ENCODE measurements at regions of chr5 and their contacts with region 1.

Region 1: DNA sequence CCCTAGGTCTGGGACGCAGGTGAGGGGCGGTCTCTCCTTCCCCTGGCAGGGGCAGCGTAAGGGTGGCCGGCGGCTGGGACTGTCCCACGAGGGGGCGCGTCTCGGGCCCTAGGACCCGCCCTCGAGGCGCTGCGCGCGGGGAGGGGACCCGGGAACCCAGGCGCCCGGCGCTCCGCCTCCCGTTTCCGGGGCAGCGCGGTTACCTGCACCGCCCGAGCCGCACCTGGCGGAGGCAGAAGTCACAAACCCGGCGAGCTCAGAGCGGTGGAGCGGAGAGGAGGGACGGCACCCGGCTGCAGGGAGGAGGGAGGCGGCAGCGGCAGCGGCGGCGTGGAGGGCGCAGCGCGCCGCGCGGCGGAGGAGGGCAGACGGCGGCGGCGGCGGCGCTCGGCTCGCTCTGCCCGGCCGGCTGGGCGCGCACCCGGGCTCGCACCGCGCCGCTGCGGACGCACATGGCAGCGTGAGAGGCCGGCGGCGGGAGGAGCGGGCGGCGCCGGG is at the start of gene WWC1:
- DNase-seq: peak; percentile 99
- H3K4me3 Mint-ChIP-seq: peak within 1 kb of the TSS; percentile 97
- H3K27ac Mint-ChIP-seq: peak within 1 kb of the TSS; percentile 85
- H3K4me1 Mint-ChIP-seq: peaks cover 81% of the 10 kb centered on the region
- H3K27me3 Mint-ChIP-seq: no peaks in the 10 kb centered on the region
- CTCF ChIP-seq: peak; percentile 30
- total RNA-seq, gene WWC1: 190 TPM in 2 replicates

Region 2: GRCh38 chr5:166810721-166811120 is 1480.8 kb before region 1 on chr5:
- CTCF ChIA-PET with region 1: no interaction called
- intact Hi-C with region 1: no loop called
- DNase-seq: no peak
- H3K4me3 Mint-ChIP-seq: no peak overlapping the region
- H3K27ac Mint-ChIP-seq: no peak overlapping the region
- H3K4me1 Mint-ChIP-seq: peaks cover 9% of the 10 kb centered on the region
- H3K27me3 Mint-ChIP-seq: no peaks in the 10 kb centered on the region
- CTCF ChIP-seq: no peak

Region 3: DNA sequence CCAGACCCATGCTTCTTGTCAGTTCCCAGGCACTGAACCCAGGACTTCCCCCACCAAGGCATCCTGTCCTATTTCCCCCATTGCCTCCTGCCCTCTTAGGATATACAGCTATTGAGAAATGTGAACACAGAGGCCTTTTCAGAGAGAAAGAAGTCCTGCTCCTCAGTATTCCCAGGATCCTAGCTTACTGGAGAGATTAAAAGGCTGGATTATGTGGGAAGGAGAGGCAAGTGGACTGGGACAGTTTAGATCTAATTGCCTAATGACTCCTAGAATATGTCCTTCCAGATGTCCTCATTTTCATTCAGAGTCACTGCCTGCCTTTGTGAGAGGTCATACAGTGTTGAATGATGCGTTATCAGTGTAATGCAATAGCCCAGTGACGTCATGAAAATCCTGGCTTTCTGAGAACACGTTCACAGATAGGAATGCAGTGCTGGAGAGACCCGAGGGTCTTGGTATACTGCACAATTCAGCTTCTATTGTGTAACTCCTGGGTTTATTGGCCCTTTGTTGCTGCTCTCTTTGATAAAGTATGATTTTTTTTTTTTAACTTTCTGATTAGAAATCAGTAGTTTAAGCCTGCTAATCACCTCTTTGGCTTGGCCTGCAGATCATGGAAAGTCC is 26.1 kb after region 1 on chr5:
- CTCF ChIA-PET with region 1: interaction called, 32 read pairs
- intact Hi-C with region 1: loop called (anchors 1 kb)
- DNase-seq: peak; percentile 77
- H3K4me3 Mint-ChIP-seq: peak overlapping the region; percentile 66
- H3K27ac Mint-ChIP-seq: peak overlapping the region; percentile 82
- H3K4me1 Mint-ChIP-seq: peaks cover 79% of the 10 kb centered on the region
- H3K27me3 Mint-ChIP-seq: no peaks in the 10 kb centered on the region
- CTCF ChIP-seq: no peak

Region 4: DNA sequence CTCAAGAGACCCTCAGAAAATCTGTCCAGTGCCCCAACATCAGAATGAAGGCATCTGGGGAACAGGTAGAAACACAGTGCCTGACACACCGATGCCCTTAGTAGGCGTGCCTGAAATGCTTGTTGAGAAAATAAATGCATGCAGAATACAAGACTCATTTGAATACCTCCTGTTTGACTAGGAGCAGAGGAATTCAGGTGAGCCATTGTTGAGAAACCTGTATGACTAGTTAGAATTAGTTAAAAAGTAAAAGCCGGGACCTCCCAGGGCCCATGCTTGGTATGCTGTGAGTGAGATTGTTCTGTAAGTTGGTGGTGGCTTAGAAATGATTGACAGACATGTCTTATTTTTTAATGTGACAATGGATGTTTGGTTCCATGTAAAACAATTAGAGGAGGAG is 54.9 kb after region 1 on chr5:
- CTCF ChIA-PET with region 1: interaction called, 9 read pairs
- intact Hi-C with region 1: loop called (anchors 2 kb)
- DNase-seq: peak; percentile 84
- H3K4me3 Mint-ChIP-seq: peak overlapping the region; percentile 53
- H3K27ac Mint-ChIP-seq: peak overlapping the region; percentile 85
- H3K4me1 Mint-ChIP-seq: peaks cover 91% of the 10 kb centered on the region
- H3K27me3 Mint-ChIP-seq: no peaks in the 10 kb centered on the region
- CTCF ChIP-seq: no peak

Region 5: DNA sequence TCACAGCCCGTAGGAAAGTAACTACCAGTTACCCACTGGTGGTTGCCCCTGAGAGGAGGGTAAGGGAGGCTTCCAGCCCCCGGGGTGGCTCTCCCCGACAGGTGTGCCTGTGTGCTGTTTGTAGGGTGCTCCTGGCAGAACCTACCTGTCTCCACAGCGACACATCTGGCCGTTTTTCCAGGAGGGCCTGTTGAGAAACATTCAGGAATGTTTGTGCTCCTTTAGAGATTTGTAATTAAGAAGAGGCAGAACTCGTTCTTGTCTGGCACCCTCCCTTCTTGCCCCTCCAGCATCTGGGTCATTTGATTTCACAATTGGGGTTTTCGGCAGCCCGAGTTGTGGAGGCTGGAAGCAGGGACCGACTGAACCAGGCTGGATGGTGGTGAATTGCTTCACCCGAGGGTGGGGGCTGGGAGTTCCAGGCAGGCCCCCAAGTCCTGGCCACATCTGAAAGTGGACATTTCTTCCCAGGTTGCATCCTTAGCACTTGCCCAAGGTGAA is 74.1 kb after region 1 on chr5:
- CTCF ChIA-PET with region 1: interaction called, 7 read pairs
- intact Hi-C with region 1: loop called (anchors 2 kb)
- DNase-seq: peak; percentile 82
- H3K4me3 Mint-ChIP-seq: peak overlapping the region; percentile 49
- H3K27ac Mint-ChIP-seq: peak overlapping the region; percentile 72
- H3K4me1 Mint-ChIP-seq: peaks cover 66% of the 10 kb centered on the region
- H3K27me3 Mint-ChIP-seq: no peaks in the 10 kb centered on the region
- CTCF ChIP-seq: peak; percentile 50